ENCODE measurements at regions of chr5 and their contacts with region 1.

Region 1: GRCh38 chr5:149434162-149435014 is 55.3 kb upstream of the IL17B start:
- DNase-seq: peak in 2 of 6 donors; percentile 57 to 65
- ATAC-seq: peak; percentile 53 to 77 (median 68)
- H3K4me3 ChIP-seq: no peak overlapping the region
- H3K27ac ChIP-seq: no peak overlapping the region
- H3K4me1 ChIP-seq: no peaks in the 10 kb centered on the region
- H3K27me3 ChIP-seq: no peaks in the 10 kb centered on the region
- CTCF ChIP-seq: peak; percentile 69 to 87 (median 76)

Region 2: GRCh38 chr5:149381987-149382340 is 52.4 kb before region 1 on chr5:
- intact Hi-C with region 1: loop called in 1 of 3 experiments (anchors 5 kb)
- DNase-seq: peak; percentile 46 to 89 (median 74)
- ATAC-seq: peak; percentile 81 to 94 (median 91)
- H3K4me3 ChIP-seq: no peak overlapping the region
- H3K27ac ChIP-seq: no peak overlapping the region
- H3K4me1 ChIP-seq: no peaks in the 10 kb centered on the region
- H3K27me3 ChIP-seq: no peaks in the 10 kb centered on the region
- CTCF ChIP-seq: peak; percentile 82 to 90 (median 87)

Measured in pancreas (tissue), 10 donors.